Right lobe of liver (tissue), 6 donors: ENCODE measurements at regions of chr10 and their contacts with region 1.

Region 1: DNA sequence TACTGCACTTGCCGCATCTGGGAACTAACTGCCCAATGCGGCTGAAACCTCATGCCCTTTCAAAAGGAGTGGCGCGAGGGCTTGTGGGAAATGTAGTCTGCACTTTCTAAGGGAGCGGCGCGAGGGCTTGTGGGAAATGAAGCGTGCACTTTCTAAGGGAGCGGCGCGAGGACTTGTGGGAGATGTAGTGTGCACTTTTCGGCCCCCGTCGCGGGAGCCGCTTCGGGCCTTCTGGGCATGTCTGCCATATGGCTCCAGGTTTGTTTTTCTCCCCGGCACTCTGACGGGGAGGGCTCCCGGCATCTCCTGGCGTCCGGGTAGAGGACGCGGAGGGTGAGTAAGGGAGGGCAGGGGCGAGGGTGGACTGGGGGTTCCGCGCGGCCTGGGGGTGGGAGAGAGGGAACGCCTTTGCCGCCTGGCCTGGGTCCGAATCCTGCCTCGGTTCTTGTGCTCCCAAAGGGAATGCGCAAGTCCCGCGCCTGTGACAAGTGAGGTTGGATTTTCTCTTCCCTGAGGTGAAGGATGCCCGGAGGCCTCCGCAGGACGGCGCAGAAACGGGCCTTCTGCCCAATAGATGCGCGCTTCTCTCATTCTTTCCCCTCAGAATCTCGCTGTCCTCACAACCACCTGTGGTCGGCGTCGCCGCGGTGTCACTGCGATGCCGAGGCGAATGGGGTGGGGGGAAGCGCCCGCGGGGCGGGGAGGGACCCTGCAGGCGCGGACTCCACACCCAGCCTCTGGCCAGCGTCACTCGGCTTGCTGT is at the start of gene ZNF37A:
- DNase-seq: peak; percentile 92 to 96 (median 95)
- ATAC-seq: peak; percentile 98 to 99 (median 99)
- H3K4me3 ChIP-seq: peak within 1 kb of the TSS; percentile 76 to 89 (median 80)
- H3K27ac ChIP-seq: peak within 1 kb of the TSS; percentile 58 to 90 (median 74)
- H3K4me1 ChIP-seq: no peaks in the 10 kb centered on the region
- H3K27me3 ChIP-seq: no peaks in the 10 kb centered on the region
- CTCF ChIP-seq: no peak
- POLR2A ChIP-seq: peak; percentile 85
- total RNA-seq, gene ZNF37A: 5.5 to 7.9 (median 6.4) TPM

Region 2: GRCh38 chr10:37976091-37976879 is 118.1 kb before region 1 on chr10 and contains the start of gene ZNF25:
- intact Hi-C with region 1: loop called in 1 of 2 experiments (anchors 5 kb)
- DNase-seq: peak; percentile 98 to 99 (median 99)
- ATAC-seq: peak; percentile 98 to 100 (median 98)
- H3K4me3 ChIP-seq: peak within 1 kb of the TSS; percentile 82 to 91 (median 86)
- H3K27ac ChIP-seq: peak within 1 kb of the TSS; percentile 92 to 98 (median 96)
- H3K4me1 ChIP-seq: no peaks in the 10 kb centered on the region
- H3K27me3 ChIP-seq: no peaks in the 10 kb centered on the region
- CTCF ChIP-seq: peak; percentile 82 to 95 (median 84)
- POLR2A ChIP-seq: peak; percentile 83
- total RNA-seq, gene ZNF25: 1.1 to 3.1 (median 2.6) TPM